ENCODE measurements at regions of chr11 and their contacts with region 1.

Region 1: GRCh38 chr11:67239783-67240575 is 26.3 kb upstream of the GRK2 start:
- DNase-seq: peak; percentile 97

Region 2: GRCh38 chr11:67118801-67119584 is 121.0 kb before region 1 on chr11 and contains the start of gene KDM2A:
- intact Hi-C with region 1: loop called (anchors 5 kb)
- DNase-seq: peak; percentile 99
- total RNA-seq, gene KDM2A: 46.4 TPM

Region 3: DNA sequence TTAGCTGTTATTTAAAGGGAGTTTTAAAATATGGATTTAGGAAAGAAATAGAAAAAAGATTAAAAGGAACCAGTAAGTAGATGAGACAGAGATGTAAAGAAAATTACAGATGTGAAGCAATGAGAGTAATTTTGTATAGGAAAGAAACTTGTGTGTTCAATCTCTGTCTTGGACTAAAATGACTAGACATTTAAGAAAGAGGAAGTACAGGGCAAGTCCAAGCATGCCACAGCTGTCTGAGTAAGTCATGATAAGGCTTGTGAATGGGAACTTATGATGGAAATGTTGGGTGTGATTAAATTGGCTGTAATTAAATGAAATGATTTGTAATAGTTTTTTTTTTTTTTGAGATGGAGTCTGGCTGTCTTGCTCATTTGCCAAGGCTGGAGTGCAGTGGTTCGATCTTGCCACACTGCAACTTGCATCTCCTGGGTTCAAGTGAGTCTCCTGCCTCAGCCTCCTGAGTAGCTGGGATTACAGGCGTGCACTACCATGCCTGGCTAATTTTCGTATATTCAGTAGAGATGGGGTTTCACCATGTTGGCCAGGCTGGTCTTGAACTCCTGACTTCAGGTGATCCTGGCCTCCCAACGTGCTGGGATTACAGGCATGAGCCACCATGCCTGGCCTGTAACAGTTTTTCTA is 416.4 kb after region 1 on chr11:
- intact Hi-C with region 1: no loop called
- DNase-seq: peak; percentile 38

Measured in cardiac septum (tissue), 1 donor.